Right ventricle myocardium superior (tissue), 1 donor: ENCODE measurements at regions of chr14 and their contacts with region 1.

Region 1: DNA sequence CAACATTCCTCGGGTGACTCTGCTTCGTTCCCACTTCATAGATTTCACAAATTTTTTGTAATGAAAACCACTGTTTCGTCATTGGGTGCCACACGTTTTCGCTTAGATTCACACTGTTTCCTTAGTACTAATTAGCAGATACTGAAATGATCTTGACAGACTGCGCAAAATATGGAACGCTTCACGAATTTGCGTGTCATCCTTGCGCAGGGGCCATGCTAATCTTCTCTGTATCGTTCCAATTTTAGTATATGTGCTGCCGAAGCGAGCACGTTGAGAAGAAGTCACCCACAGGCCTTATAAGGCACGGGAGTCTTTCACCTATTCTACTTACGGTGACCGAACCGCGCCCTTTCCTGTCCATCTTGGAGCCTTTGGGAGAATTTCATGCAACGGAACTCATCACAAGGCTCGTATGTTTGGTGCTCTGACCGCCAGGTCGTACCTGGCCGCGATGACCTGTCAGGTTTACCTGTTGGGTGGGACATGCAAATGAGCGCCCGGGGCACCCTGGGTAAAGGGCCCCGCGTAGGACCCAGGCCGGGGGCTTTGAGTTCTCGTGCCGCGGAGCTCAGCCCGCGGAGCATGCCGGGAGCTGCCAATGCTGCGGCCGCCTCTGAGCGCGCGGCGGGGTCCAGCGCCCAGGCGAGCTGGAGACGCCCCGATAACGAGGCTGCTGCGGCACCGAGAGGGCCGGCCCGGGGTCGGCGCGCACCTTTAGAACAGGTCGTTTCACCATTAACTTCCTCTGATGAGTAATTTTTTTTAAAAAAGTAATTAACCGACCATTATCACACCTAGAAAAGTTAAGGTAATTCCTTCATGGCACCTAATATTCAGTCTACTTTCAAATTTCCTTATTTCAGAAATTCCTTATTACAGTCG is at the start of gene RNU6-8:
- DNase-seq: peak; percentile 91
- ATAC-seq: peak; percentile 94
- total RNA-seq, gene RNU6-8: not detected

Region 2: DNA sequence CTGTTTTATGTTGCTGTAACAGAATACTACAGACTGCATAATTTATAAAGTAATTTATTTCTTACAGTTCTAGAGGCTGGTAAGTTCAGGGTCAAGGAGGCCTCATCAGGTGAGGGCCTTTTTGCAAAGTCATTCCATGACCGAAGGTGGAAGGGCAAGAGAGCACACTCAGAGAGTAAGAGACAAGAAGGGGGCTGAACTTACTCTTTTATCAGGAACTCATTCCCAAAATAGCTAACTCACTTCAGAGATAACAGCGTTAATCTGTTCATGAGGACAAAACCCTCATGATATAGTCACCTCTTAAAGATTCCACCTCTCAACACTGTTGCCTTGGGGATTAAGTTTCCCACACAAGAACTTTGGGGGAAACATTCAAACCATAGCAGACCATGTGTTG is 52.8 kb before region 1 on chr14:
- intact Hi-C with region 1: loop called (anchors 5 kb)
- DNase-seq: no peak
- ATAC-seq: peak; percentile 76